PC-9 (cell line): ENCODE measurements at regions of chr22 and their contacts with region 1.

Region 1: GRCh38 chr22:31075961-31076360 is 5.2 kb upstream of the SMTN start:
- DNase-seq: no peak
- H3K4me3 ChIP-seq: no peak overlapping the region
- H3K27ac ChIP-seq: no peak overlapping the region
- H3K4me1 ChIP-seq: no peaks in the 10 kb centered on the region
- H3K27me3 ChIP-seq: no peaks in the 10 kb centered on the region
- CTCF ChIP-seq: no peak

Region 2: GRCh38 chr22:30979932-30980331 is 96.0 kb before region 1 on chr22:
- CTCF ChIA-PET with region 1: no interaction called
- POLR2A ChIA-PET with region 1: no interaction called
- intact Hi-C with region 1: no loop called
- DNase-seq: no peak
- H3K4me3 ChIP-seq: no peak overlapping the region
- H3K27ac ChIP-seq: no peak overlapping the region
- H3K4me1 ChIP-seq: no peaks in the 10 kb centered on the region
- H3K27me3 ChIP-seq: no peaks in the 10 kb centered on the region
- CTCF ChIP-seq: no peak

Region 3: DNA sequence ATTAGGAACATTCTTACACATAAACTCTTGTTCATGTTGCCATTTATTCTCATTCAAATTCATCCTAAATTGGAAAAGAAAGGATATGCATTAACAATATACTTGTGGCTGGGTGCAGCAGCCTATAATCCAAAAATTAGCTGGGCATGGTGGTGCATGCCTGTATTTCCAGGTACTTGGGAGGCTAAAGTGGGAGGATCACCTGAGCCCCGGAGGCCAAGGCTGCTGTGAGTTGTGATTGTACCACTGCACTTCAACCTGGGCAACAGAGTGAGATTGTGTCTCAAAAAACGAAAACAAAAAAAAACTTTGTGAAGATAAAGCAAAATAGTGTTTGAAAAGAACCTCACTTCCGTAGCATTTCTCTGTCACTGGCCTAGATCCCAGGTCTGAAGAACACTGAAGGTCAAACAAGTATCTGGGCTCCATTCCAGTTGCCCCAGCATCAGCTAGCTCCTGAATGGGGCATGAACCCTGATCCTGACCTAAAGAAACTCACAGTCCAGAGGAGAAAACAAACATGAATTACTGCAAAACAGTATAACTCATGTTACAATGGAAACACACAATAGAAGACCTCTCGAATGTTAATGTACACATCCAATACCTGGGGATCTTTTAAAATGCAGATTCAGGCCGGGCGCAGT is 74.7 kb before region 1 on chr22:
- CTCF ChIA-PET with region 1: no interaction called
- POLR2A ChIA-PET with region 1: no interaction called
- intact Hi-C with region 1: no loop called
- DNase-seq: no peak
- H3K4me3 ChIP-seq: no peak overlapping the region
- H3K27ac ChIP-seq: no peak overlapping the region
- H3K4me1 ChIP-seq: no peaks in the 10 kb centered on the region
- H3K27me3 ChIP-seq: no peaks in the 10 kb centered on the region
- CTCF ChIP-seq: no peak

Region 4: DNA sequence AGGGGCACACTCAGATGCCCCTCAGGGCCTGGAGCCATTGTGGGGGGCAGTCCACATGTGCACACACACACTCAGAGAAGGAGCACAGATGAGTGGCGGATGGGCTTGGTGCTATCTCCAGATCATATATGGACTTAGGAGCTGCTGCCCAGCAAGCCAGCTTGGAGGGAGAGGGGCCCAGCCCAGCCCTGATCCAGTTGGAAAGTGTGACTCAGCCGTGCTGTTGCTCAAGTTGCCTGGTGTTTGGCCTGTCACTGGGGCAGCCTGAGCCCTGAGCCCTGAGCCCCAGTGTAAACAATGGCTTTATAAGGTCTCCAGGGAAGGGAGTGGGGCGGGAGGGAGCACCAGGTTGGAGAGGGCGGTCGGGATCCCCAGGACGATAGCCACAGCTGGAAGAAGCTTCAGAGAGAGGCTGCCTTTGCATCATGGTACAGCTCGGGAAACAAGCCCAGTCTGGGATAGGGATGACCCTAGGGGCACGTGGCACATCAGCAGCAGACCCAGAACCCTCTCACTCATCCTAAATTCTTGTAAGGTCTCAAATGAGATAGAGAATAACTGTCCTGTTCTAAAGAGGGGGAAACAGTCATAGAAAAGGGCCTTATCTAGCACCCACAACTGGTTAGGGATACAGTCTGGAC is 26.6 kb after region 1 on chr22:
- CTCF ChIA-PET with region 1: no interaction called
- POLR2A ChIA-PET with region 1: no interaction called
- intact Hi-C with region 1: no loop called
- DNase-seq: peak; percentile 71 to 80
- H3K4me3 ChIP-seq: no peak overlapping the region
- H3K27ac ChIP-seq: no peak overlapping the region
- H3K4me1 ChIP-seq: peaks cover 19% of the 10 kb centered on the region
- H3K27me3 ChIP-seq: no peaks in the 10 kb centered on the region
- CTCF ChIP-seq: no peak

Region 5: GRCh38 chr22:31816750-31817149 is 740.8 kb after region 1 on chr22:
- CTCF ChIA-PET with region 1: no interaction called
- POLR2A ChIA-PET with region 1: interaction called, 16 read pairs
- intact Hi-C with region 1: no loop called
- DNase-seq: no peak
- H3K4me3 ChIP-seq: no peak overlapping the region
- H3K27ac ChIP-seq: no peak overlapping the region
- H3K4me1 ChIP-seq: 0 out of 2 replicates have a peak, but pooled peaks cover 3% of the 10 kb centered on the region
- H3K27me3 ChIP-seq: no peaks in the 10 kb centered on the region
- CTCF ChIP-seq: no peak